HCT116 (cell line): ENCODE measurements at regions of chr18 and their contacts with region 1.

Region 1: DNA sequence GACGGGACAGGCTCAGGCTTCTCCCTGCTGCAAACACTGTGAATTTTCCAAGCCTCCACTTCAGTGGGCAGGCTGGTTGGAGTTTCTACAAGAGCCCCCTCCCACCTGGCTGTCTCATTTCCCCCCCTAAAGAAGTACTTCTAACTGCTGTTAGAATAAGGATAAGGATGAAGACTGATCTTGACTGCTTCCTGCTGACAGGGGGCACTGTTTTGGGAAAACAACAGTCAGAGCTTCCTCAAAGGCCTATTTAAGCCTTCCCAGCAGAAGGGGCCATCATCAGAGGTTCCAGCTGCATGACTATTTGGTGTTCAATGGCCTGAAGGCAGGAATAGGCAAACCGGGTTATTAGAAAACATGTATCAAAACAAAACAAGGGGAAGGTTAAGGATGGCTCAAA is 1162.8 kb downstream of the DSC3 start:
- DNase-seq: no peak
- ATAC-seq: no peak
- H3K4me3 ChIP-seq: no peak overlapping the region
- H3K27ac ChIP-seq: no peak overlapping the region
- H3K4me1 ChIP-seq: no peaks in the 10 kb centered on the region
- H3K27me3 ChIP-seq: no peaks in the 10 kb centered on the region
- CTCF ChIP-seq: peak in 1 of 3 experiments; percentile 9; a peak in 1 of 6 replicates
- POLR2A ChIP-seq: no peak
- RAD21 ChIP-seq: no peak

Region 2: GRCh38 chr18:29928081-29928480 is 48.3 kb after region 1 on chr18:
- CTCF ChIA-PET with region 1: no interaction called
- POLR2A ChIA-PET with region 1: no interaction called
- RAD21 ChIA-PET with region 1: no interaction called
- intact Hi-C with region 1: no loop called
- DNase-seq: no peak
- ATAC-seq: no peak
- H3K4me3 ChIP-seq: no peak overlapping the region
- H3K27ac ChIP-seq: no peak overlapping the region
- H3K4me1 ChIP-seq: no peaks in the 10 kb centered on the region
- H3K27me3 ChIP-seq: no peaks in the 10 kb centered on the region
- CTCF ChIP-seq: no peak
- POLR2A ChIP-seq: no peak
- RAD21 ChIP-seq: no peak

Region 3: DNA sequence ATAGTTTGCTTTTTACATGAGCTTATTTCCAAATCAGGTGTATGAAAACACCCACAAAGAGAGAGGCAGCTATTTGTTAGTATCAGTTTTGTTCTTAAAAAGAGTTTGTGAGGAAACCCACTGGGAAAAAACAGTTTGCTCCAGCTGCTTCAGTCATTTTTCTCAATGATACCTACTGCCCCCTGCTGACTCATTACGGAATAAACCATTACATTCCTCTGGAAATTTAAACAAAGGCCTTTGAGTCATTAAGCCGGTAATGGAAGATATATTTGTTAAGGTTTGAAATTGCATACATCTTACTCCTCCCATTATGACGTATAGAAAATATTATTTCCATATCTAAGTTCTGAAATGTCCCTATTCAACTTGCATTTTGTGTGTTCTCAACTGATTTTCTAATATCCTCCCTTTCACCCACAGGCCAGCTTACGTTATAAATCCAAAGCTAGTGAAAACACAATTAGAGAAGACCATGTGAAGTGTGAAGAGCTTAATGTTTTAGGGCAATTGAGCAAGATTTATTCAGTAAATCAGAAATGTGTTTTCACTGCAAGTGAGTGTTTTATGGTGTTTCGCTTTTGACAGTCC is 401.2 kb after region 1 on chr18:
- CTCF ChIA-PET with region 1: interaction called, 16 read pairs
- POLR2A ChIA-PET with region 1: no interaction called
- RAD21 ChIA-PET with region 1: no interaction called
- intact Hi-C with region 1: loop called (anchors 10 kb)
- DNase-seq: peak; percentile 34
- ATAC-seq: no peak
- H3K4me3 ChIP-seq: no peak overlapping the region
- H3K27ac ChIP-seq: no peak overlapping the region
- H3K4me1 ChIP-seq: no peaks in the 10 kb centered on the region
- H3K27me3 ChIP-seq: no peaks in the 10 kb centered on the region
- CTCF ChIP-seq: peak; percentile 12 to 73 (median 60); a peak in 5 of 6 replicates
- POLR2A ChIP-seq: no peak
- RAD21 ChIP-seq: peak; percentile 38; the same call in 1 of the 2 replicates

Region 4: GRCh38 chr18:30406728-30407127 is 527.0 kb after region 1 on chr18:
- CTCF ChIA-PET with region 1: no interaction called
- POLR2A ChIA-PET with region 1: no interaction called
- RAD21 ChIA-PET with region 1: no interaction called
- intact Hi-C with region 1: no loop called
- DNase-seq: no peak
- ATAC-seq: no peak
- H3K4me3 ChIP-seq: no peak overlapping the region
- H3K27ac ChIP-seq: no peak overlapping the region
- H3K4me1 ChIP-seq: no peaks in the 10 kb centered on the region
- H3K27me3 ChIP-seq: no peaks in the 10 kb centered on the region
- CTCF ChIP-seq: no peak
- POLR2A ChIP-seq: no peak
- RAD21 ChIP-seq: no peak